Activated T-helper 2 cell treated with anti-CD3 and anti-CD28 coated beads, Interferon-gamma antibody, Interleukin-2, Interleukin-4, amounts not matched to agents 10 μg/mL and 5 μg/mL and 100 μg/mL, durations not matched to agents 14 hours and 24 hours and 36 hours (primary cell): ENCODE measurements at regions of chr3 and their contacts with region 1.

Region 1: DNA sequence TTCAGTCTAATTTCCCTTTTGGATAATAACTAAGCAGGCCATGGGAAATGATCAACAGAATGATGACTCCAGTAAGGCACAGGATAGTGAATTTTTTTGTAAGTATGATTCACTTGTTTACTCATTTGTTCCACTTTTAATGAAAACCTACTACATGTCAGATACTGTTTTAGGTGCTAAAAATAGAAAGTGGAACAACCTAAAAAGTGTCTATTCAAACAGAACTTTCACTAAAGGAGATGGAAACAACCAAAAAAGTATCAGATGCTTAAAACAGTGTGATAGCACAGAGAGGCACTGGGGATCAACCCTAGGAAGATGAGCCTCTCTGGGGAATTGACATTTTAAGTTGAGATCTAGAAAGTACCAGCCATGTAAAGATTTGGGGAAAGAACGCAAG is 11.1 kb downstream of the RYK start:
- DNase-seq: no peak
- H3K4me3 Mint-ChIP-seq: no peak overlapping the region
- H3K27ac Mint-ChIP-seq: peak overlapping the region; percentile 55
- H3K4me1 Mint-ChIP-seq: peaks cover 46% of the 10 kb centered on the region
- H3K27me3 Mint-ChIP-seq: peaks cover 13% of the 10 kb centered on the region

Region 2: DNA sequence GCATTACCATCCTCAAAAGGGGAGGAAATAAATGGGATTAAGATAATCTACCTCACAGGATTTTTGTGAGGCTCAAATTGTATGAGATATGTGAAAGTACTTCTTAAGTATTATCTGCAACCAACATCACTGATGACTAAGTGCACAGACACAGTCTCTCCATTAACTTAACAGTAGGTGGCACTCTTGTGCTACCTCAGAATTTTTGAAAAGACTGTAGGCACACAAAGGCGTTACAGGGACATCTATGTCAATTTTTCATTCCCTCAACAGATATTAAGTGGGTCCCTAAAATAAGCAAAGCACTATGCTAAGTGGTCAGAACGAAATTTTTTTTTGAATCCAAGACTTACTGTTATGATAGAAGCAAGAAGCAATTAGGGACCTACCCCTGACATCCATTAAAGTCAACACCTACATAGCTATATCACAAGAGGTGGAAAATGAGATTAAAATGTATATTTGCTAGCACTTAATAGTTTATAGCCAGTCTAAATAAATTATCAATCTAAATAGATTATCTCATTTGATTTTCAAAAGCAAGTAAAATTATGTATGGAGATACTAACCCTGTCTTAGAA is 41.8 kb before region 1 on chr3:
- intact Hi-C with region 1: loop called (anchors 5 kb)
- DNase-seq: no peak
- H3K4me3 Mint-ChIP-seq: no peak overlapping the region
- H3K27ac Mint-ChIP-seq: no peak overlapping the region
- H3K4me1 Mint-ChIP-seq: peaks cover 7% of the 10 kb centered on the region
- H3K27me3 Mint-ChIP-seq: no peaks in the 10 kb centered on the region

Region 3: DNA sequence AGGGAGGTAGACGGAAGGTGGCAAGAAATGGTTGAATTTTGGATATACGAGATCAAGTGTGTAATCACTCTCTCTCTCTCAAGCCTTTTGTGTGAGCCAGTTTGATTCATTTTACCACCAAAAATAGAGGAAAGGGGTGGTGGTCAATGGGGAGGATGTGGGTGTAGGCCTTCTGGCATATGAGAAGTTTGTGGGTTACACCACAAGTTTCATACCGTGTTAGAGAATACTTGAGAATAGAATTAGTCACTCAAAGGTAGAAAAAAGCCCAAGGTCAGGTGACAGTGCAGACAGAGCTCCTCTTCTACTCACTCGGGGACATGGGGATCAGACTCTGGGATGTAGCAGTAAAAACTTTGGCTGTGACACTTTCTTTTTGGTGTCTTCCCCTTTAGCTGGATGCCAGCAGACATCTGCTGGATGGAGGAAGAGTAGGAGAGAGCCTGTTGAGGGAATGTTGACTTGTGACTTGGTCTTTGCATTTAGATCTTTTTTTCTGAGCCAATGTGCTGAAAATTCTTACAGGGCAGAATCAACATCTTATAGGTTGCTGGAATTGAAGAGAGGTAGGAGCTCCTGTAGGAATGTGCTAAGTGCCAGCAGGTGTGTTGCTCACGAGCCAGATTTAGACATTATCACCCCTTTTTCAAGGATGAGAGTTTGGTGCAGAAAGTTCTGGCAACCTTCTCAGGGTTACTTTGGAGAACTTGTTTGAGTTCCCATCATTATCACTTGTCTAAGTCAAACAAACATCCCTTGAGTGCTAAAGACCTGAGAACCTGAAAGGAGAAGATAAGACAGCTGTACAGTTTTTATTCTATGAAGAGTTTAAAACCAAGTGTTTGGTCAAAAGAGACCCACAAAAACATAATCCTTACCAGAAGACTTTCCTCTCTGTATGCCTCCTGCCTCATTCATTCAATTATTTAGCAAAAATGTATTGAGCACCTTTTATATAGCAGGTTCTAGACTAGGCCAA is 55.1 kb after region 1 on chr3:
- intact Hi-C with region 1: loop called (anchors 1 kb)
- DNase-seq: peak; percentile 57
- H3K4me3 Mint-ChIP-seq: no peak overlapping the region
- H3K27ac Mint-ChIP-seq: no peak overlapping the region
- H3K4me1 Mint-ChIP-seq: no peaks in the 10 kb centered on the region
- H3K27me3 Mint-ChIP-seq: peaks cover 46% of the 10 kb centered on the region